Body of pancreas (tissue), 4 donors: ENCODE measurements at regions of chr5 and their contacts with region 1.

Region 1: DNA sequence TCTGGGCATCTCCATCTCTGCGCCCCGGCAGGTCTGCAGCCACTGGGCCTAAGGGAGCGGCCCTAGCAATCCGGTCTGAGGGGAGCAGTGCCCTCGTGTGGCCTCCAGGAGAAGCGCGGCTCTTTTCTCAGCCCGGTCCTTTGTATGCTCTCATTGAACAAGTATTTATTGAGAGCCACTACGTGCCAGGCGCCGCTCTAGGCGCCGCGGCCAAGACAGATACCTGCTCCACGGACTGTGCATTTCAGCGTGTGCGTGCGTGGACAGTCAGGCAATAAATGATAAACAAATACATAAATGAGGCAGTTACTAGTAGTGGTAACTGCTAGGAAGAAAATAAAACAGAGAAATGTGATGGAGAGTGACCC is 2.3 kb upstream of the SLC4A9 start:
- DNase-seq: peak; percentile 87 to 89 (median 88)
- ATAC-seq: peak; percentile 99
- H3K4me3 ChIP-seq: no peak overlapping the region
- H3K27ac ChIP-seq: peak overlapping the region in 2 of 4 donors; percentile 14 to 70
- H3K4me1 ChIP-seq: peaks cover 7% of the 10 kb centered on the region
- H3K27me3 ChIP-seq: no peaks in the 10 kb centered on the region
- CTCF ChIP-seq: peak; percentile 79 to 95 (median 92)
- POLR2A ChIP-seq: peak in 1 of 3 donors; percentile 23

Region 2: DNA sequence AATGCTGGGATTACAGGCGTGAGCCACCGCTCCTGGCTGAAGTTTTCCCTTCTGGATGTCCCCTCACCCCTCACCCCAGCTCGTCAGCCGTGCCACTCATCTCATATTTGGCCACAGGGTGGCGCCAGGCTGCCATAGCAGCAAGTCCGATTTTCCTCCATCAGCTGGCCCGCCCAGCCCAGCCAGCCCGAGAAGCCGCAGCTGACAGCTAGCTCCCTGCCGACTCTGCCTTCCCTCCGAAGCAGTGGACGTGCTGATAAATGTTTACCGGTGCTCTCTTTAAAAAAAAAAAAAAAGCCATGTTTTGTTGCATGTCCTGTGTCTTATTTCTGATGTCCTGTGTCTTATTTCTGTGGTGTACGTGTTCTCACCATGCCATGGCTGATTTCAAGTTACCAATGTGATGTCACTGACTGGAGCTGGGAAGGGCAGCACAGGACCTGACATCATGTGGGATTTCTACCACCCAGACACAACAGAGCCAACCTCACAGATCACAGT is 113.1 kb before region 1 on chr5:
- intact Hi-C with region 1: loop called (anchors 5 kb)
- DNase-seq: peak; percentile 93 to 95 (median 93)
- ATAC-seq: peak; percentile 80
- H3K4me3 ChIP-seq: no peak overlapping the region
- H3K27ac ChIP-seq: peak overlapping the region in 2 of 4 donors; percentile 7 to 35
- H3K4me1 ChIP-seq: peaks cover 52% of the 10 kb centered on the region
- H3K27me3 ChIP-seq: no peaks in the 10 kb centered on the region
- CTCF ChIP-seq: peak; percentile 83 to 97 (median 93)
- POLR2A ChIP-seq: no peak

Region 3: DNA sequence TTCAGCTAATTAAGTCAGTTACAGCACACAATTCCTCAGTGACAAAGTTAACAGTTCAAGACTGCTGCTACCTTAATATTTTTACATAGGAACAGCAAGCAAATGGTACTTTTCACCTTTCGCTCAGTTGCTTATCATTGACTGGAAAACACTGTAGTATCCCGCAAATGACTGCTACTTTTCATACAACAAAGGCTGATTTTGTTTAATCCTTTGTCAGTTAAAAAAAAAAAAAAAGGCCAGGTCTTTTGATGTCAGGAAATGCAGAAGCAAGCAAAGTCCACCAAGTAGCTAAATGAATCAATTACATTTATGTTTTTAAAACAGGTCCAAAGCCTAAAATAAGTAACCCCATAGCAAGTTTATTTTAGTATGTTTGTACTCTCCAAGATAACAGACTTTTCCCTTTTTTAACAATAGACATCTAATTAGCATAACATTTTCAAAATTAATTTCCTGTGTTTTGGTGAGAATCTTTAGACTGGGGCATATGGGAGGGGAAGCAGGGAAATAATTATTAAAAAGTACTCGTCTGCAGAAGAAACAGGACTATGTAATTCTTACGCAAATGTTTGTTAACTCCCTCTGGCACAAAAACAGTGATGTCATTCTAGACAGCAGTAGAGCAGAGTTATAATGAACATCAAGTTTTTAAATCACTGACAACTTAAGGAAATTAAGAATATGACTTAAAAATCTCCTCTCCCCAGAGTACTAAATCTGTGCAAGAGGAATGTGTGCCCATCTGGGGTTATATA is 64.4 kb before region 1 on chr5:
- intact Hi-C with region 1: no loop called
- DNase-seq: no peak
- ATAC-seq: peak; percentile 52
- H3K4me3 ChIP-seq: no peak overlapping the region
- H3K27ac ChIP-seq: peak overlapping the region in 2 of 4 donors; percentile 39
- H3K4me1 ChIP-seq: peaks cover 22% of the 10 kb centered on the region
- H3K27me3 ChIP-seq: no peaks in the 10 kb centered on the region
- CTCF ChIP-seq: no peak
- POLR2A ChIP-seq: no peak

Region 4: DNA sequence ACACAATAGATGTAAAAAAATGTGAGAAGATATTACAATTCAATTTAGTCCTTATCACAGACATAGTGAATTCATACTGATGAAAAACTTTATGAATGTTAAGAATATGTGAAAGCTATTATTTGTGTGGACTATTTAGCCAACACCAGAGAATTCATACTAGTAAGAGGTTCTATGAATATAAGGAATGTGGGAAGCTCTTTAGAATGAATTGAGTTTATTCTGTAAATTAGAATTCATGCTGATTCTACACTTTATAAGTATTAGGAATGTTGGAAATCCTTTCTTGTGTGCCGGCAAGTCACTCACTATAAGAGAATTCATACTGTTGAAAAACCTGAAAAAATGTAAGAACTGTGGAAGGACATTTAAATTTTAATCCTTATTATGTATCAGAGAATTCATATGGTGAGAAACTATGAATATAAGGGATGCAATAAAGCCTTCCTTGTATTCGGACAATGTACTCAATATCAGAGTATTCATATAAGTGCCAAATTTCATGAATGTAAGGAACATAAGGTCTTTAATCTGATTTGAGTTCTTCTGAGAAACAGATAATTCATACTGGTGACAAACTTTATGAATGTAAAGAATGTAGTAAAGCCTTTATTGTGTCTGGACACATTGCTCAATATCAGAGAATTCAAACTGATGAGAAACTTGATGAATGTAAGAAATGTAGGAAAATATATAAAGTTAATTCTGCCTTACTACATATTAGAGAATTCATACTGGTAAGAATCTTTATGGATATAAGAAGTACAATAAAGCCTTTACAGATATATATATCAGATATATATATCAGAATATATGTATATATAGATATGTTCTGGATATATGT is 406.7 kb after region 1 on chr5:
- intact Hi-C with region 1: no loop called
- DNase-seq: no peak
- ATAC-seq: no peak
- H3K4me3 ChIP-seq: no peak overlapping the region
- H3K27ac ChIP-seq: no peak overlapping the region
- H3K4me1 ChIP-seq: no peaks in the 10 kb centered on the region
- H3K27me3 ChIP-seq: no peaks in the 10 kb centered on the region
- CTCF ChIP-seq: no peak
- POLR2A ChIP-seq: no peak

Region 5: GRCh38 chr5:141349917-141350619 is 992.4 kb after region 1 on chr5 and contains the start of gene PCDHGB1:
- intact Hi-C with region 1: no loop called
- DNase-seq: peak; percentile 31 to 54 (median 46)
- ATAC-seq: peak; percentile 45
- H3K4me3 ChIP-seq: no peak within 1 kb of the TSS
- H3K27ac ChIP-seq: no peak within 1 kb of the TSS
- H3K4me1 ChIP-seq: no peaks in the 10 kb centered on the region
- H3K27me3 ChIP-seq: no peaks in the 10 kb centered on the region
- CTCF ChIP-seq: peak in 6 of 7 experiments; percentile 13 to 41 (median 38)
- POLR2A ChIP-seq: no peak
- total RNA-seq, gene PCDHGB1: 3.9 to 6.9 TPM